HEK293 (cell line): ENCODE measurements at regions of chr3 and their contacts with region 1.

Region 1: DNA sequence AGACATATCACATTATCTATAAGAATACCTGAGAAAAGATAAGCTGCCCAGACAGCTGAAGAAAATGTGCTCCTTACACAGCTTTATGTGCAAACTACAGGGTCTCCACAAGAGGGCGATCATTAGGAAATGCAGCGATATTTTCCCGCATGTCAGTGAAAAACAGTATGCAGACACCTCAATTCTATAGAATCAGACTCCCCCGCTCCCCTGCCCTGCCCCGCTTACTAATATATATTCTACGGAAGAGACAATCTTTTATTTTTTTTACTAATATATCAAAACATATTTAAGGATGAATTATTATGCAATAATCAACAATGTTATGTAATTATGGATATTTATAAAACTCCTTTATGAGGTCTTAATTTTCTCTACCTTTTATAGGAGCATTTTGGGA is 681.3 kb downstream of the ROBO1 start:
- H3K4me3 ChIP-seq: no peak overlapping the region
- H3K27ac ChIP-seq: no peak overlapping the region
- H3K4me1 ChIP-seq: no peaks in the 10 kb centered on the region
- CTCF ChIP-seq: peak; percentile 26; the same call in 1 of the 2 replicates

Region 2: GRCh38 chr3:79097964-79098660 is 11.6 kb after region 1 on chr3:
- CTCF ChIA-PET with region 1: interaction called, 13 read pairs
- POLR2A ChIA-PET with region 1: no interaction called
- H3K4me3 ChIP-seq: no peak overlapping the region
- H3K27ac ChIP-seq: no peak overlapping the region
- H3K4me1 ChIP-seq: no peaks in the 10 kb centered on the region
- CTCF ChIP-seq: no peak

Region 3: DNA sequence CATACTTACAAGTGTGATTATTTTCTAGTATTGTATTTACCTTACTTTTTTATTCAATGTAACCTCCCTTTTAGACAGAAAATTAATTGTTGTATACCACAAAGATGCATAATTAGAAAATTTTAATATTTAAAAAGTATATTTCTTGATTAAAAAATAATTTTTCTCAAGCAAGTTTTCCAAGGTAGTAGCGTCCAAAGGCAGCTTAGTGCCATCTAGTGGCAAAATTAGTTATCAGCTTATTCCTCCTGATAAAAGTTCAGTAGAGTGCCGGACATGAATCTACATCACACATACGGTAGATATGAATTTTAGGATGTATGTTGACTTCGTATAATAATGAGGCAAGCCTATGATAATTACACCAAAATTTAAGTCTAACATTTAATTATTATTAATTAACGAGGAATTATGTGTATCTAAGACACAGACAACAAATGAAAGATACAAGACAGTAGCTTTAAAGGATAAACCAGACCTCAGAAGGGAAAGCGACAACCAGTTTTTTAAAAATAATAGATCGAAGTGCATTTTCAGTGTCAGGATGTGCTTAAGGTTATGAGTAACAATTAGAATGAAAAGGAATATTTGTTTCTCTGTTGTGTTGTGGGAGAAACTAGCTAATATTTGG is 275.3 kb after region 1 on chr3:
- CTCF ChIA-PET with region 1: interaction called, 20 read pairs
- POLR2A ChIA-PET with region 1: no interaction called
- H3K4me3 ChIP-seq: no peak overlapping the region
- H3K27ac ChIP-seq: no peak overlapping the region
- H3K4me1 ChIP-seq: no peaks in the 10 kb centered on the region
- CTCF ChIP-seq: no peak